Mammary epithelial cell (primary cell): ENCODE measurements at regions of chr18 and their contacts with region 1.

Region 1: DNA sequence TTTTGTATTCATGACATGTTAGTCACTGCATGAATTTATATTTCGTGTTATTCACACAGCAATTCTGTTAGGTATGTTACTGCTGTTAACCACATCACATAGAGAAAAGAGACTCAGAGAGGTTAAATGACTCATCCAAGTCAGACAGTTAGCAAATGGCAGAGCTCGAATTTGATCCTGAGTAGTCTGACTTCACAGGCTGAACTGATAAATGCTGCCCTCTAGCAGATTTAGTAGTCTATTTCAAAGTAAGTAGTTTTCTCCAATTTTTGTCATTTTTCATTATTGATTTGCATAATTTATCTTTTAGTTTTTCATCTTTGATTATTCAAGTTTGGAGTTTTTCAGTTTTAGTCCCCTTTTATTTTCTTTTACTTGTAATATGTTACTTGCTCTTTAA is 58.3 kb downstream of the WDR7 start:
- DNase-seq: peak; percentile 86
- H3K4me3 ChIP-seq: no peak overlapping the region
- H3K27ac ChIP-seq: no peak overlapping the region
- H3K4me1 ChIP-seq: no peaks in the 10 kb centered on the region
- H3K27me3 ChIP-seq: no peaks in the 10 kb centered on the region
- CTCF ChIP-seq: peak; percentile 33 to 50

Region 2: DNA sequence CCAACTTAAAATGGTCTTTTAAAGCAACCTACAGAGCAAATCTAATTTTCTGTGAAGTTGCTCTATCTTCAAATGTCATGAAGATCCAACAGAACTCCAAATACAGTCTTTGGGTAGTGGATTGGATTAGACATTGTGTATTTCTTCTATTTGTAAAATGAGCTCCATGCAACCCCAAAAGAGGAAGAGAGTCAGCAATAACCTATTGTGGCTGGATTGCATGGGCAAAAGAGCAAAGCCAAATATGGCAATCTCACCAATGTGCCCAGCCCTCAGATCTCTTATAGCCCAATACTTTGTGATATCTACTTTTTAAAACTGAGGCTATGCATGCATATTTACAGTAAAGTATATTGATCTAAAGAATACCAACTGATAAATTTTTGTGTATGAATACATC is 217.3 kb before region 1 on chr18:
- CTCF ChIA-PET with region 1: no interaction called
- dilution Hi-C with region 1: no loop called
- in situ Hi-C with region 1: no loop called
- intact Hi-C with region 1: no loop called
- DNase-seq: no peak
- H3K4me3 ChIP-seq: no peak overlapping the region
- H3K27ac ChIP-seq: no peak overlapping the region
- H3K4me1 ChIP-seq: no peaks in the 10 kb centered on the region
- H3K27me3 ChIP-seq: no peaks in the 10 kb centered on the region
- CTCF ChIP-seq: no peak

Region 3: GRCh38 chr18:56645415-56646016 is 63.9 kb before region 1 on chr18:
- CTCF ChIA-PET with region 1: no interaction called
- dilution Hi-C with region 1: no loop called
- in situ Hi-C with region 1: no loop called
- intact Hi-C with region 1: loop called (anchors 2 kb)
- DNase-seq: no peak
- H3K4me3 ChIP-seq: no peak overlapping the region
- H3K27ac ChIP-seq: no peak overlapping the region
- H3K4me1 ChIP-seq: peaks cover 10% of the 10 kb centered on the region
- H3K27me3 ChIP-seq: no peaks in the 10 kb centered on the region
- CTCF ChIP-seq: peak; percentile 54 to 62